Naive thymus-derived CD4-positive, alpha-beta T cell (primary cell): ENCODE measurements at regions of chr3 and their contacts with region 1.

Region 1: GRCh38 chr3:108818404-108818803 is 4.2 kb upstream of the TRAT1 start:
- DNase-seq: peak in 8 of 9 donors; percentile 43 to 82 (median 71)
- ATAC-seq: peak; percentile 95
- H3K4me3 ChIP-seq: no peak overlapping the region
- H3K4me3 Mint-ChIP-seq: peak overlapping the region in 8 of 10 donors; percentile 17 to 75 (median 55)
- H3K27ac ChIP-seq: no peak overlapping the region
- H3K27ac Mint-ChIP-seq: peak overlapping the region; percentile 2 to 100 (median 80)
- H3K4me1 ChIP-seq: peaks cover 26 to 29% of the 10 kb centered on the region in 2 donors
- H3K4me1 Mint-ChIP-seq: peaks cover 14 to 44% (median 31%) of the 10 kb centered on the region in 7 donors
- H3K27me3 ChIP-seq: no peaks in the 10 kb centered on the region
- H3K27me3 Mint-ChIP-seq: no peaks in the 10 kb centered on the region

Region 2: DNA sequence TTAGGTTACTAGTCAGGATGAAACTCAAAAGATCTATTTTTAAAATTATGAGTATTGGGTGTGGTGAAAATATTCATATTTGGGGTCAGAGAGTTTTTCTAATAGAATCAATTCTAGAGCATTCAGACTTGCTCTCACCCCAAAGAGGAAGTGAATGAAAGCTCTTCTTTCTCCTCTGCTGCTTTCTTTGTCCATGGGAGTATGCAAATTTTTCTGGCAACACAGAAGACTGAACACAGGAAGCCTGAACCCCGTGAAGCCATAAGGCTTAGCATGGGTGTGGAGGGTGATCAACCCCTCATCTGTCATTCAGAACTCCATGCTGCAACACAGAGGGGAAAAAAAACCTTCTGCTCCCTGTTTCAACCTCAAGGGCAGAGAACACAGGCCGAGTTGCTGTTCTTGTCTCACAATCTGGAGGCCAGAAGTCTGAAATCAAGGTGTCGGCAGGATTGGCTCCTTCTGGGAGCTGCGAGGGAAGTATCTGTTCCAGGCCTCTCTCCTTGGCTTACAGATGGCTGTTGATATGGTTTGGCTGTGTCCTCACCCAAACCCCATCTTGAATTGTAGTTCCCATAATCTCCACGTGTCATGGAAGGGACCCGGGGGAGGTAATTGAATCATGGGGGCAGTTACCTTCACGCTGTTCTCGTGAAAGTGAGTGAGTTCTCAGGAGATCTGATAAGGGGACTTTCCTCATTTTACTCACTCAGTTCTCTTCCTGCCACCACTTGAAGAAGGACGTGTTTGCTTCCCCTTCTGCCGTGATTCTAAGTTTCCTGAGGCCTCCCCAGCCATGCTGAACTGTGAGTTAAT is 693.9 kb before region 1 on chr3:
- CTCF ChIA-PET with region 1: no interaction called
- POLR2A ChIA-PET with region 1: no interaction called
- intact Hi-C with region 1: loop called (anchors 5 to 10 kb)
- DNase-seq: peak; percentile 33 to 88 (median 74)
- ATAC-seq: peak; percentile 79
- H3K4me3 ChIP-seq: peak overlapping the region; percentile 66
- H3K4me3 Mint-ChIP-seq: peak overlapping the region; percentile 82 to 98 (median 90)
- H3K27ac ChIP-seq: peak overlapping the region; percentile 89
- H3K27ac Mint-ChIP-seq: peak overlapping the region; percentile 92 to 99 (median 97)
- H3K4me1 ChIP-seq: peaks cover 48 to 56% of the 10 kb centered on the region in 2 donors
- H3K4me1 Mint-ChIP-seq: peaks cover 52 to 92% (median 68%) of the 10 kb centered on the region in 7 donors
- H3K27me3 ChIP-seq: no peaks in the 10 kb centered on the region
- H3K27me3 Mint-ChIP-seq: peaks cover 0 to 2% (median 0%) of the 10 kb centered on the region in 5 donors

Region 3: GRCh38 chr3:108552267-108553159 is 265.9 kb before region 1 on chr3:
- CTCF ChIA-PET with region 1: interaction called, 3 read pairs
- POLR2A ChIA-PET with region 1: no interaction called
- intact Hi-C with region 1: loop called in 1 of 2 experiments (anchors 1 kb)
- DNase-seq: peak in 7 of 9 donors; percentile 4 to 40 (median 28)
- ATAC-seq: peak; percentile 66
- H3K4me3 ChIP-seq: no peak overlapping the region
- H3K4me3 Mint-ChIP-seq: no peak overlapping the region
- H3K27ac ChIP-seq: no peak overlapping the region
- H3K27ac Mint-ChIP-seq: no peak overlapping the region
- H3K4me1 ChIP-seq: no peaks in the 10 kb centered on the region
- H3K4me1 Mint-ChIP-seq: peaks cover 0 to 12% (median 0%) of the 10 kb centered on the region in 7 donors
- H3K27me3 ChIP-seq: no peaks in the 10 kb centered on the region
- H3K27me3 Mint-ChIP-seq: no peaks in the 10 kb centered on the region

Region 4: GRCh38 chr3:108662130-108662738 is 156.2 kb before region 1 on chr3:
- CTCF ChIA-PET with region 1: interaction called, 42 read pairs
- POLR2A ChIA-PET with region 1: no interaction called
- intact Hi-C with region 1: loop called (anchors 1 kb)
- DNase-seq: peak in 7 of 9 donors; percentile 53 to 79 (median 74)
- ATAC-seq: peak; percentile 95
- H3K4me3 ChIP-seq: no peak overlapping the region
- H3K4me3 Mint-ChIP-seq: peak overlapping the region in 6 of 10 donors; percentile 0 to 43 (median 15)
- H3K27ac ChIP-seq: no peak overlapping the region
- H3K27ac Mint-ChIP-seq: peak overlapping the region in 2 of 9 donors; percentile 6 to 22
- H3K4me1 ChIP-seq: no peaks in the 10 kb centered on the region
- H3K4me1 Mint-ChIP-seq: peaks cover 0 to 20% (median 17%) of the 10 kb centered on the region in 7 donors
- H3K27me3 ChIP-seq: no peaks in the 10 kb centered on the region
- H3K27me3 Mint-ChIP-seq: peaks cover 0 to 5% (median 0%) of the 10 kb centered on the region in 5 donors

Region 5: GRCh38 chr3:108835101-108835500 is 16.7 kb after region 1 on chr3:
- CTCF ChIA-PET with region 1: interaction called, 16 read pairs
- POLR2A ChIA-PET with region 1: interaction called, 194 read pairs
- intact Hi-C with region 1: loop called (anchors 1 kb)
- DNase-seq: peak in 7 of 9 donors; percentile 60 to 85 (median 75)
- ATAC-seq: peak; percentile 94
- H3K4me3 ChIP-seq: peak overlapping the region; percentile 43
- H3K4me3 Mint-ChIP-seq: peak overlapping the region; percentile 85 to 100 (median 92)
- H3K27ac ChIP-seq: peak overlapping the region; percentile 78
- H3K27ac Mint-ChIP-seq: peak overlapping the region; percentile 83 to 100 (median 94)
- H3K4me1 ChIP-seq: peaks cover 69% of the 10 kb centered on the region in 2 donors
- H3K4me1 Mint-ChIP-seq: peaks cover 42 to 96% (median 88%) of the 10 kb centered on the region in 7 donors
- H3K27me3 ChIP-seq: no peaks in the 10 kb centered on the region
- H3K27me3 Mint-ChIP-seq: no peaks in the 10 kb centered on the region

Region 6: DNA sequence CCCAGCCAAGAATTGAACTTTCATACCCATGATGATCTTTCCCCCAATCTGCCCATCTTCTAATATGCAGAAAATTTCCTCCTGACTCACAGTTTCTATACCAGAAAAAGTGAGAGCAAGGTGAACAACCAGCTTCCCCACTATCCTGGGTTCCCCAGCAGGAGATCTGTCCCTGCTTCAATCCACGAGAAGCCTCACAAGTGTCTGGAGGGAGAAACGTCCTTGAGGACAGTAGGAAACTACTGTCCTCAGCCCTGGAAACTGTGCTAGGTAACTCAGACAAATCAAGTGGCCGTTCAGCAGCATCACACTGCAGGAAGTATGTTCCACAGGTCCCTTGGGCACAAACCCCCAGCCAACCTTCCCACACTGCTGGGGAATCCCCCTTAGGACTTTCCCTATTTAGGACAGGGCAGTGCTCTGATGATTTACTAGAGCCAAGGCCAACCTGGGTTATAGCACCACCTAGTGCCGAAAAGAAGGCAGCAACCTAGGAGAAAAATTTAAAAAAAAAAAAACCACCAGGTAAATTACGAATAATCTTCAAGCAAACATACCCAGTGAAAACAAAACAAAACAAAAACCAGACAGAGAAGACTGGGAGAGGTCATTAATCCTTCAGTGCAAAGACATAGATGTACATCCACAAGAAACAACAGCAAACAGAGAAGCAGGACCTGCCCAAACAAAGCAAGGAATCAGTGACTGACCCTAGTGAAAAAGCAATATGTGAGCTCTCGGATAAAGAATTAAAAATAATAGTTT is 263.5 kb after region 1 on chr3:
- CTCF ChIA-PET with region 1: no interaction called
- POLR2A ChIA-PET with region 1: no interaction called
- intact Hi-C with region 1: loop called in 1 of 2 experiments (anchors 5 kb)
- DNase-seq: peak in 2 of 9 donors; percentile 14 to 30
- ATAC-seq: peak; percentile 84
- H3K4me3 ChIP-seq: no peak overlapping the region
- H3K4me3 Mint-ChIP-seq: no peak overlapping the region
- H3K27ac ChIP-seq: no peak overlapping the region
- H3K27ac Mint-ChIP-seq: peak overlapping the region in 1 of 9 donors; percentile 48
- H3K4me1 ChIP-seq: no peaks in the 10 kb centered on the region
- H3K4me1 Mint-ChIP-seq: peaks cover 0 to 3% (median 0%) of the 10 kb centered on the region in 7 donors
- H3K27me3 ChIP-seq: no peaks in the 10 kb centered on the region
- H3K27me3 Mint-ChIP-seq: peaks cover 25 to 54% (median 33%) of the 10 kb centered on the region in 5 donors